Breast epithelium (tissue), 4 donors: ENCODE measurements at regions of chr14 and their contacts with region 1.

Region 1: GRCh38 chr14:29045237-29045636 is 278.6 kb downstream of the FOXG1 start:
- DNase-seq: no peak
- H3K4me3 ChIP-seq: no peak overlapping the region
- H3K27ac ChIP-seq: no peak overlapping the region
- H3K4me1 ChIP-seq: no peaks in the 10 kb centered on the region
- H3K27me3 ChIP-seq: no peaks in the 10 kb centered on the region
- CTCF ChIP-seq: no peak
- POLR2A ChIP-seq: no peak

Region 2: GRCh38 chr14:28966416-28967233 is 78.6 kb before region 1 on chr14:
- intact Hi-C with region 1: loop called (anchors 5 kb)
- DNase-seq: no peak
- H3K4me3 ChIP-seq: no peak overlapping the region
- H3K27ac ChIP-seq: no peak overlapping the region
- H3K4me1 ChIP-seq: no peaks in the 10 kb centered on the region
- H3K27me3 ChIP-seq: no peaks in the 10 kb centered on the region
- CTCF ChIP-seq: no peak
- POLR2A ChIP-seq: no peak

Region 3: DNA sequence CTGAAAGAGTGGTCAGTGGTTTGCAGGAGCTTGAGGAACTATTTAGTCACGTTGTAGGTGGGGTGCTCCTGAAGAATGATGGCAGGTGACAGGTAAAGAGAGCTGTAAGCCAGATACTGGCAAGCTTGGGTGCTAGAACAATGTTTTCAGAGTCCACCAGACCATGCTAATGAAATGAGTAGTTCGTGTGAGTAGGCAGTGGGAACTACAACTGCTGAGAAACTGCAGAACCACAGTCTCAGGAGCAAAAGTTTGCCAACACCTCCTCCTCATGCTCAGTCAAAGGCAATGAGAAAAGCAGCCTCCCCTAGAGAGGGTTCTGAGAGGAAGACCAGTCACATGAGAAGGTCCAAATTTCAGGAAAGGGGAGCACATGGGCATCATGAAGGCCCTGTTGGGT is 791.2 kb after region 1 on chr14:
- intact Hi-C with region 1: no loop called
- DNase-seq: no peak
- H3K4me3 ChIP-seq: no peak overlapping the region
- H3K27ac ChIP-seq: no peak overlapping the region
- H3K4me1 ChIP-seq: no peaks in the 10 kb centered on the region
- H3K27me3 ChIP-seq: no peaks in the 10 kb centered on the region
- CTCF ChIP-seq: no peak
- POLR2A ChIP-seq: no peak